ENCODE measurements at regions of chr12 and their contacts with region 1.

Region 1: DNA sequence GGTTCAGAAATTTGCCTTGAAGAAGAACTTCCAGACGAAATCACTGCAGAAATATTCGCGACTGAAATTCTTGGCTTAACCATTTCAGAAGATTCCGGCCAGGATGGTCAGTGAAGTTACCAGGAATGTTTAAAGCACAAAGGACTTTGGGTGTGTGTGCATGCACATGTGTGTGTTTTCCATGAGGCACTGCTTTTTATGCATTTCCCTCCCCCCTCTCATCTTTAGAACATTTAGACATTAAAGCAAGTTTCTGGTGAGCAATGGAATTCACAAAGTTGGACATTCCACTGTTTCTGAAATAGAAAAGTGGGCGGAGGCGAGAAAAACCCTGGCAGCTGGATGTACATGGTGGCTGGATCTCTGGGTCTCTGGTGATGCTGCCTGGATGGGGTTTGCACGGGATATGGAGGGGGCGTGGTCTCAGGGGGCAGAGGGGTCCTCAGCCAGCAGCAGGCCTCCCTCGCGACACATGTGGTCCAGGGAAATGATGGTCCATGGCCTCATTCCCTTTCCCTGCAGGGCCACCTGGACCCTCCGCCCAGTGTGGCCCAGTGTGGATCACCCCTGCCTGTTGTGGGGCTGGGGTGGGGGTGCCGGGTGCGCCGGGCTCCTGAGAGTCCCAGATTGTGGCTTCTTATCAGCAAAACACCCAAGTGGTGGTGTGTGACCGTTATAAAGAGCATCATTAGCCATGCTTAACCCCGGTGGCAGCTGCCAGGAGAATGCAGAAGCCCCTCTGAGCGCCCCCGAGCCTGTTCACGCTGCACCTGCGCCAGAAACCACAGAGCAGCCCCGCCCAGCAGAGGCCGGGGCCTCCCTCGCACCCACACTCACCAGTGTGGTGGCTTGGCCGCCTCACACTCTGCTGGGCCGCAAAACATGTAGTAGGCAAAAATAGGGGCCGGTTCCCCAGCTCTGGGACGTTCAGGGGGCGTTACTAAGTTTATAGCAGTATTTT is 17.8 kb upstream of the BCL7A start:
- DNase-seq: peak; percentile 68
- ATAC-seq: peak; percentile 86
- H3K4me3 Mint-ChIP-seq: peak overlapping the region; percentile 67
- H3K27ac Mint-ChIP-seq: peak overlapping the region; percentile 87
- H3K4me1 Mint-ChIP-seq: peaks cover 76% of the 10 kb centered on the region
- H3K27me3 Mint-ChIP-seq: peaks cover 3% of the 10 kb centered on the region
- CTCF ChIP-seq: no peak

Region 2: DNA sequence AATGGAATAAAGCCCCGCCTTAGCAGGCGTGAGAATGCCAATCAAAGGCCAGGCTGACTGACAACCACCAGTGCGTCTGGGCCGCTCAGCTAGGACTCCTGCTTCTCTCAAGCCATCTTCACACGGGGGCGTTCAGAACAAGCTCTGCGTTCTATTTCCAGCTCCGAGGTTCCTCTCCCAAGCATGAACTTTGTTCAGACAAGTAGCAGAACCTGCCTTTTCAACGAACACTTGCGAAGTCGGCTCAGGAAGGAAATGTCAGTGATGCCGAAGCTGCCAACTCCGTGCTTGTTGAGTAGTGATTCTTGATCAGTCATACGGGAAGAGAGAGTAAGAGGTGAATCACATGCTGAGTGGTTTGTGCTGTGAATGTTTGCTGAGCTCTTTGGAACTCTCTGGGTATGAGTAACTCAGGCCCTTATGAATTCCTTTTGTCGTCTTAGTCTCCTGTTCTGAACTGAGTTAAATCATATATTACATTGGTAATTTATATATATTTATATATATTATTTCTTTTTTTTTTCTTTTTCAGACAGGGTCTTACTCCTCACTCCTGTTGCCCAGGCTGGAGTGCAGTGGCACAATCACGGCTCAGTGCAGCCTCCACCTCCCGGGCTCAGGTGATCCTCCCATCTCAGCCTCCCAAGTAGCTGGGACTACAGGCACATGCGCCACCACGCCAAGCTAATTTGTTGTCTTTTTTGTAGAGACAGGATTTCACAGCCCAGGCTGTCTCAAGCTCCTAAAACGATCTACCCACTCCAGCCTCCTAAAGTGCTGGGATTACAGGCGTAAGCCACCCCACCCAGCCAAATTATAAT is 11.7 kb before region 1 on chr12:
- CTCF ChIA-PET with region 1: interaction called, 3 read pairs
- POLR2A ChIA-PET with region 1: interaction called, 130 read pairs
- intact Hi-C with region 1: loop called (anchors 1 kb)
- DNase-seq: peak; percentile 48
- ATAC-seq: peak; percentile 87
- H3K4me3 Mint-ChIP-seq: peak overlapping the region; percentile 75
- H3K27ac Mint-ChIP-seq: peak overlapping the region; percentile 97
- H3K4me1 Mint-ChIP-seq: peaks cover 49% of the 10 kb centered on the region
- H3K27me3 Mint-ChIP-seq: no peaks in the 10 kb centered on the region
- CTCF ChIP-seq: no peak

Measured in activated B cell treated with CpG ODN at 0.5 μM for 24 hours (primary cell).